CD4-positive, alpha-beta T cell (primary cell): ENCODE measurements at regions of chr2 and their contacts with region 1.

Region 1: DNA sequence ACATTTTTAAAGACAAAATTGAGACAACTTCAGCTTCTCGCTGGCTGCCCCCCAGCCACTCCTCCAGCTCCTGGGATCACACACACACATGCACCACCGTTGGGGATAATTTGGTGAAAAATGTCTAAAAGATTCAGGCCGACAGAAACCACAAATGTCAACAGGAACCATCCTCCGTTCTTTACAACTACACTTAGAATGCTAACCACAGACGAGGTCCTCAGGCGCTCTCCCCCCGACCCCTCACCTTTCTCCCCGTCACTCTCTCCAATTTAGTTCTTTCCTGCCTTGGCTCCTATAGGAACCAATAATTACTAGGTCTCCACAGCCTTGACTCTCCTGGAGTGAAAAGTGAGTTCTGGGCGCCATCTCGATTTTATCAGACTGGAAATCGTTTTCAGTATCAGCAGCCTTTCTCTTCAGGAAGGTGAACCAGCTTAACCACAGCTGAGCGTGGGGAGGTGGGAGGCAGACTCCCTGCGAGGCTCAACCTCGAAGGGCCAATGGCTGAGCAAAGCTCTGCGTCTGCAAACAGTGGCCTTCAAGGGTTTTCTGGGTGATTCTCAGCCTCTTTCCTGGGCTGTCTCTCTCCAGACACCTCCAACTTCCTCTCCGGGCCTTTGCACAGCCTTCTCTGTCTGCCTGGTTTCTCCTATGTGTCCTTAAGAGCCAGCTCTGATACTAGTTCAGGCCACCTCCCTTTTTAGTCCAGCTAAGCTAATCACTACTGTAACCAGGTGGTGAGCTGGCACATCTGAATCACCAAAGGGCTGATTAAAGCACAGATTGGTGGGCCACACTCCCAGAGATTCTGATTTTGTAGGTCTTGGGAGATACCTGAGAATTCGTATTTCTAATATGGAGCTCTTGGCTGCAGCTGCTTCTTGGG is 115.7 kb upstream of the COPS8 start:
- DNase-seq: peak in 13 of 14 experiments; percentile 13 to 61 (median 41)
- ATAC-seq: peak; percentile 39
- H3K4me3 ChIP-seq: peak overlapping the region; percentile 42
- H3K4me3 Mint-ChIP-seq: peak overlapping the region; percentile 82
- H3K27ac ChIP-seq: peak overlapping the region; percentile 55 to 87
- H3K27ac Mint-ChIP-seq: peak overlapping the region; percentile 96
- H3K4me1 ChIP-seq: peaks cover 47% of the 10 kb centered on the region
- H3K4me1 Mint-ChIP-seq: peaks cover 66% of the 10 kb centered on the region
- H3K27me3 ChIP-seq: no peaks in the 10 kb centered on the region
- H3K27me3 Mint-ChIP-seq: no peaks in the 10 kb centered on the region
- CTCF ChIP-seq: no peak

Region 2: DNA sequence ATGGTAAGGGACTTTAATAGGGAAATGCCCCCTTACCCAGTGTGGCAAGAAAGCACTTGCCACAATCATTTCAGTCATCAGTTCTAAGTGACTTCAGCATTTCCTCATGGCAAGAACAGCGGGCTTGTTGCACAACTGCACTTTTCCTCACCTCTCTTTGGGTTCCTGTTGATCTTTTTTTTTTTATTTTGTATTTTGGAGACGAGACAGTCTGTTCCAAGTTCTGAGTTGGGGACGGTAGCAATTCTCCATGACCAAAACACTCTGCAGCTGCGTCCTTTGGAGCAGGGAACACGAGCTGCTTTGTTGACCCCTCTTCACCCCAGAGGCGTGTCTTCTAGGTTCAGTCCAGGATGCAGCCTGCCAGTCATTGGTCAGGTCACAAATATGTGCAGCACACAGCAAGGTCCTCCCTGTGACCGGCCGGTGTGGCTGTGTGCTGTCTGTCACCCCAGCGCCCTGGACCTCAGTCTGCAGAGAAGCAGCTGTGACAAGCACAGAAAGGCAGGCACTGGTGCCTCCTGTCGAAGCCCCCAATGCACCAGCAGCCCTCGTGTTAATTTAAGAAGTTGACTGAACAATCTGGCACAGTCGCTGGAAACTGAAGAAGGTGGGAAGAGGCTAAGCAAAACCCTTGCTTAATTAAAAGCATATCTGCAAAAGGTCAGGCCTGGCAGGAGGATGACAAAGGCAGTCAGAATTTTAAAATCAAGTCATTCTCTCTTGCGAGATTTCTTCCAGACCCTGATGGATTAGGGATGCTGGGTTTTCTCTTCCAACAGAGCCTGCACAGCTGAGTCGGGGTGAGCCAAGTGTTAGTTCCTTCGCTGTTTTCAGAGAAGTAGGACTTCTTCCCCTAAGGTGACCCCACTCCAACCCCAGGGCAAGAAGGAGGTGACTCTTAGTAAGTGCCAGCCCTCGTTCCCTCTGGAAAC is 18.9 kb after region 1 on chr2:
- CTCF ChIA-PET with region 1: no interaction called
- POLR2A ChIA-PET with region 1: no interaction called
- intact Hi-C with region 1: no loop called
- DNase-seq: peak in 1 of 14 experiments; percentile 22
- ATAC-seq: no peak
- H3K4me3 ChIP-seq: no peak overlapping the region
- H3K4me3 Mint-ChIP-seq: no peak overlapping the region
- H3K27ac ChIP-seq: no peak overlapping the region
- H3K27ac Mint-ChIP-seq: no peak overlapping the region
- H3K4me1 ChIP-seq: no peaks in the 10 kb centered on the region
- H3K4me1 Mint-ChIP-seq: no peaks in the 10 kb centered on the region
- H3K27me3 ChIP-seq: peaks cover 0 to 9% of the 10 kb centered on the region in 2 experiments
- H3K27me3 Mint-ChIP-seq: peaks cover 26% of the 10 kb centered on the region
- CTCF ChIP-seq: no peak

Region 3: DNA sequence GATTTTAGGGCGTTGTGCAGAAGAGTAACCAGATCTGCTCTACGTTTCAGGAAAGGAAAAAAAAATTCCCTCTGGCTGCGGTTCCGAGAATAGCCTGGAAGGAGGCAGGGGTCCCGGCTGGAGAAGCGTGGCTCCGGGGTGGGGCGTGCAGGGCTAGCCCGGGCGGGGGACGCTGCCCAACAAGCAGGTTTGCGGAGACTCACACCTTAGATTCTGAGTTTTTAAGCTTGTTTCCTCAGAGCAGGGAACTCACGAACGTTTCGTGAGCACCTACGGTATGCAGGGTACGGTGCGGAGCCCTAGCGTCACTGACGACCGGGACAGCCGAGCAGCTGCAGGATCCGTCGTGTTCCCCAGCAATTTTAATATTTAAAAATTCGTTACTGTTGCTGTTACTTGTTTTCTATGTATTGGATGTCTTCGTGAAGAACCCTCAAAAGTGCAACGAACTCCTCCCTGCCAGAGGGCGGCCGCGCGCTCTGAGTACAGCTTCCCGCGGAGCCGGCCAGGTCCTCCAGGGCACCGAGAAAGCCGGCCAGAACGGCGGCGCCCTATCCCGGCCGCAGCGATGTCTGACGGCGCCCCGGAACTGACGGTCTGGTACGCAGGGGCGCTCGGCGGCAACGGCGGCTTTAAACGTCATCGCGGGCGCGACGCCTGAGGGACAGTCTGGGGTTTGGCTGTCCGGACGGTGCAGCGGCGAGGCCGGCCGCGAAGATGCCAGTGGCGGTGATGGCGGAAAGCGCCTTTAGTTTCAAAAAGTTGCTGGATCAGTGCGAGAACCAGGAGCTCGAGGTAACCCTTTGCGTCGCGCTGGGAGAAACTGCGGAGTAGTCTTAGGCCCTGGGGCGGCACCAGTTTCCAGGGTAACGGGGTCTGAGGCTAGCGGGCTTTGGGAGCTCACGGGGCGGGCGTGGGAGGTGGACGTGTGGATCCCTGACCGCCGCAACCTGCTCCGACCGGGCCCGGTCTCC is 115.5 kb after region 1 on chr2 and contains the start of gene COPS8:
- CTCF ChIA-PET with region 1: no interaction called
- POLR2A ChIA-PET with region 1: interaction called, 13 read pairs
- intact Hi-C with region 1: no loop called
- DNase-seq: peak; percentile 79 to 95 (median 88)
- ATAC-seq: peak; percentile 97
- H3K4me3 ChIP-seq: peak within 1 kb of the TSS; percentile 95
- H3K4me3 Mint-ChIP-seq: peak within 1 kb of the TSS; percentile 99
- H3K27ac ChIP-seq: peak within 1 kb of the TSS; percentile 76 to 85
- H3K27ac Mint-ChIP-seq: peak within 1 kb of the TSS; percentile 98
- H3K4me1 ChIP-seq: peaks cover 9% of the 10 kb centered on the region
- H3K4me1 Mint-ChIP-seq: peaks cover 35% of the 10 kb centered on the region
- H3K27me3 ChIP-seq: no peaks in the 10 kb centered on the region
- H3K27me3 Mint-ChIP-seq: no peaks in the 10 kb centered on the region
- CTCF ChIP-seq: peak; percentile 47
- total RNA-seq, gene COPS8: 47.9 to 51.7 TPM

Region 4: DNA sequence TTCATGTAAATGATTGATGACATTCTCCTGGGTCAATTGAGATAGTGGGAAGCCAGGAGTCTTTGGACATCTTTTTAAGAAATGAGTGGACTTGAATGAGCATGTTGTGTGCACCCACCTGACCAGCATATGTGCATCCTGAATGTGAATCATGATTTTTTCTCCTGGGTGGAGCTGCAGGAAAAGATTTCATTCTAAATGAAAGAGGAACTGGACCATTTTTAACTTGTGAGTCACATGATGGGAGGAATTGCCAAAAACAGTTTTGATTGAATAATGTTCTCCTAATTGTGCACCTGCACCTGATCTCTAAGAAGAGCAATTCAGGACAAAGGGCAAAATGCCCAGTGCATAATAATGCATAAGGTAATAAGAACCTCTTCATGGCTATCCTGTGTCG is 148.0 kb after region 1 on chr2:
- CTCF ChIA-PET with region 1: no interaction called
- POLR2A ChIA-PET with region 1: no interaction called
- intact Hi-C with region 1: no loop called
- DNase-seq: no peak
- ATAC-seq: no peak
- H3K4me3 ChIP-seq: no peak overlapping the region
- H3K4me3 Mint-ChIP-seq: no peak overlapping the region
- H3K27ac ChIP-seq: no peak overlapping the region
- H3K27ac Mint-ChIP-seq: no peak overlapping the region
- H3K4me1 ChIP-seq: no peaks in the 10 kb centered on the region
- H3K4me1 Mint-ChIP-seq: no peaks in the 10 kb centered on the region
- H3K27me3 ChIP-seq: no peaks in the 10 kb centered on the region
- H3K27me3 Mint-ChIP-seq: no peaks in the 10 kb centered on the region
- CTCF ChIP-seq: no peak